Head of caudate nucleus (tissue), 42 donors: ENCODE measurements at regions of chr12 and their contacts with region 1.

Region 1: DNA sequence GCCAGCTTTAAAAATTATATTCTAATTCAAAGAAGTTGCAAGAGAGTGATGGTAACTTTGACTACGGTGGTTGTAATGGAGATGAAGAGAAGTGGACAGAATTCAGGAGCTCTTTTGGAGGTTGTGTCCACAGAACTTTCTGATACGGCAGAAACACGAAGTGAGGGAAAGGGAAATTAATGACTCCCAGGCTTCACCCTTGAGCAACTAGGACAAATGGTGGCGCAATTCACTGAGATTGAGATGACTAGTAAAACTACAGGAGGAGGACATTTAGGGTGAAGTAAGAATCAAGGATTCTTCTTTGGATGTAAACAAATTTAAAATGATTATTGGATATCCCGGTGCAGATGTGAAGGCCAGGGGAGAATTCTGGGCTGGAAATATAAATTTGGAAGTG is 212.6 kb downstream of the PTPRO start:
- DNase-seq: peak in 1 of 42 donors; percentile 41

Region 2: GRCh38 chr12:15575671-15576541 is 41.0 kb after region 1 on chr12:
- intact Hi-C with region 1: loop called (anchors 5 kb)
- DNase-seq: no peak